ENCODE measurements at regions of chr6 and their contacts with region 1.

Region 1: GRCh38 chr6:111873178-111874024 is at the start of gene FYN:
- DNase-seq: peak; percentile 92
- ATAC-seq: peak; percentile 99
- H3K4me3 ChIP-seq: peak within 1 kb of the TSS; percentile 66 to 82 (median 68)
- H3K27ac ChIP-seq: no peak within 1 kb of the TSS
- H3K4me1 ChIP-seq: peaks cover 40% of the 10 kb centered on the region
- H3K27me3 ChIP-seq: peaks cover 0 to 21% of the 10 kb centered on the region in 2 experiments; a peak in 4 of 5 replicates
- CTCF ChIP-seq: peak; percentile 47
- EP300 ChIP-seq: no peak
- POLR2A ChIP-seq: no peak; a peak in 1 of 4 replicates
- RAD21 ChIP-seq: peak; percentile 56; the same call in 1 of the 2 replicates
- total RNA-seq, gene FYN: 14.6 and 15.5 TPM in 2 replicates

Region 2: DNA sequence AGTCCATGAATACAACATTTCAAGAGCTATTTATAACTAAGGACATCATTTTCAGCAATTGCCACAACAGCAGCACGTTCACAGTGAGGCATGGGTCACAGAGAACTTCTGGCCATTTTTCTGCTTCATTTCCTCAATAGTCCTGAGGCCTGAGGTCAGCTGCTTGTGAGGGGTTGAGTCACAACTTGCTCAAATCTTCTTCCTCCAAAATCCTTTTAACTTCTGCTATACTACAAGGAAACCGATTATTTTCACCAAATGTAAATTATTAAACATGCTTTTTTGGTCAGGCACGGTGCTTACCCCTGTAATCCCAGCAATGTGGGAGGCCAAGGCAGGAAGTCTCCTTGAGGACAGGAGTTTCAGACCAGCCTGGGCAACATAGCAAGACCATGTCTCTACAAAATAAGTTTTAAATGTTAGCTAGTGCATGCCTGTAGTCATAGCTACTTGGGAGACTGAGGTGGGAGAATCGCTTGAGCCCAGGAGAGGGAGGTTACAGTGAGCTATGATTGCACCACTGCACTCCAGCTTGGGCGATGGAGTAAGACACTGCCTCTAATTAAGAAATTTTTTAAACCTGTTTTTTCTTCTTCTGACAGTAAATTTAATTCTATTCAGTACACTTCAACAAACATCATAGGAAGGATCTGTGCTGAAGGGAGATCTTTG is 797.2 kb before region 1 on chr6:
- CTCF ChIA-PET with region 1: no interaction called
- POLR2A ChIA-PET with region 1: no interaction called
- in situ Hi-C with region 1: no loop called
- intact Hi-C with region 1: no loop called
- DNase-seq: no peak
- ATAC-seq: no peak
- H3K4me3 ChIP-seq: no peak overlapping the region
- H3K27ac ChIP-seq: no peak overlapping the region
- H3K4me1 ChIP-seq: no peaks in the 10 kb centered on the region
- H3K27me3 ChIP-seq: peaks cover 2 to 8% of the 10 kb centered on the region in 2 experiments; a peak in 2 of 5 replicates
- CTCF ChIP-seq: no peak
- EP300 ChIP-seq: no peak
- POLR2A ChIP-seq: no peak
- RAD21 ChIP-seq: no peak

Region 3: DNA sequence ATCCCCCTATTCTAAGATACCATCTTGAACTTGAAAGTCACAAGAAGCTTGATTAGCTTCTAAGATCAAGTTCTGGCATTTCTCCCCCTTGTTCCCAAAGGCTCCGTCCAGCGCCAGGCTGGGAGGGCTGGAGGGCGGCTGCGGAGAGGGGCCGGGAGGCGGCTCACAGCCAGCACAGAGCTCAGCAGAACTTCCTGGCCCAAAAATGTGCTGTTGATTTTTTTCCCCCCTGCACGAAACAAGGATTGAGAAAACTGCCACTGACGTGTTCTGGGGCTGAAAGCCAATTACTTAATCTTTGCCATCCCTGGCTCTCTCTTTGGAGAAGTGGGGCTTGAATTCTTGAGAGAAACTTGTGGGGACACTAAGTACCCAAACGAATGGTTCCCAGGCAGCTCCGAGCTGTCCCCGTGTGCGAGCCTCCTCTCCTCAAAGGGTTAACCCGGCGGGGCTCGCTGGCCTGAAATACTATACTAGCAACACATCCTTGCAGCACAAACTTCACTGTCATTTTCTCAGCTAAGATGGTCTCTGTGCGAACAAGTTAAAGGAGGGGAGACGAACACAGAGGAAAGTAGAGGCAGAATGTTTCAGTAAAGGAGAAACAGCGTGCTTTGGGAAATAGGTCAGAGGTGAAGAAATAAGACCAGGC is 268.2 kb before region 1 on chr6:
- CTCF ChIA-PET with region 1: no interaction called
- POLR2A ChIA-PET with region 1: no interaction called
- in situ Hi-C with region 1: no loop called
- intact Hi-C with region 1: no loop called
- DNase-seq: no peak
- ATAC-seq: peak; percentile 45
- H3K4me3 ChIP-seq: peak overlapping the region; percentile 72 to 93 (median 82)
- H3K27ac ChIP-seq: peak overlapping the region; percentile 66
- H3K4me1 ChIP-seq: peaks cover 78% of the 10 kb centered on the region
- H3K27me3 ChIP-seq: no peaks in the 10 kb centered on the region; a peak in 1 of 5 replicates
- CTCF ChIP-seq: no peak
- EP300 ChIP-seq: no peak
- POLR2A ChIP-seq: no peak
- RAD21 ChIP-seq: no peak

Region 4: DNA sequence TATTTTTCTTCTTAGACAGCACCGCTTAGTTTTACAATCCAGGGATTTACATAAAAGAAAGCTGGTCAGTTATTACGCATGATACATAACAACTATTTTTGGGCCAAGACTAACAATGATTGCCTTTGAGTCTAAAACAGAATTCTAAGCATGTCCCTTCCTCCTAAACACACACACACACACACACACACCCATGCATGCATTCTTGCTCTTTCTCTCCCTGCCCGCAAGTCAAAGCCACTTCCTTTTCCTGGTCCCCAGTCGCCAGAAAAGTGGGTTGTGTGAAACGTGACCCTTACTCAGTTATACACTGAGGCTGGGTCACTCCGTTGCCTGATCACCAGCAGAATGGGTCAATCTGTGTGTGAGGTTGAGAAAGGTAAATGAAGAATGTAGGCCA is 31.6 kb before region 1 on chr6:
- CTCF ChIA-PET with region 1: no interaction called
- POLR2A ChIA-PET with region 1: no interaction called
- in situ Hi-C with region 1: no loop called
- intact Hi-C with region 1: loop called (anchors 1 kb)
- DNase-seq: no peak
- ATAC-seq: no peak
- H3K4me3 ChIP-seq: no peak overlapping the region
- H3K27ac ChIP-seq: no peak overlapping the region
- H3K4me1 ChIP-seq: peaks cover 53% of the 10 kb centered on the region
- H3K27me3 ChIP-seq: no peaks in the 10 kb centered on the region
- CTCF ChIP-seq: no peak
- EP300 ChIP-seq: no peak
- POLR2A ChIP-seq: no peak
- RAD21 ChIP-seq: no peak

Region 5: DNA sequence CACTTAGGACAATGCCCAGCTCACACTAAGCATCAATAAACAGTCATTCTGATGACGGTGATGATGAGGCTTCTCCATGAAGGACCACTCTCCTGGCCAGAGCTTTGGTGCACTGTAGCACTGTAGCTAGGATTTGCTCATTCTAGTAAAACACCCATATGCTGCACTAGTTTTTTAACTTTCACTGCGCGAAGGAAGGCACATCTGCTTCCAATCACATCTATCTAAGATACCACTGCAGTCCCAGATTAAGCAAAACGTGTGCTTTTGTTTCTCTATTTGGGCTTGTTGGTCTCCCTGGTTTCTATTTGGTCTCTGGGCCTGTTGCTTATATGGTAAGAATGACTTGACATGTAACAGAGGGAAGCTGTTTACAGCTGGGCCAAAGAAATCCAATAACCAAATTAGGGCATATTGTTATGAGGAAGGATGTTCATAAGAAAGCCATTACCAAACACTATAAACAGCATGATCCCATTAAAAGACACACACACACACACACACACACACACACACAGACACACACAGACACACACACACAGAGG is 276.4 kb after region 1 on chr6:
- CTCF ChIA-PET with region 1: no interaction called
- POLR2A ChIA-PET with region 1: no interaction called
- in situ Hi-C with region 1: no loop called
- intact Hi-C with region 1: no loop called
- DNase-seq: no peak
- ATAC-seq: no peak
- H3K4me3 ChIP-seq: no peak overlapping the region
- H3K27ac ChIP-seq: no peak overlapping the region
- H3K4me1 ChIP-seq: peaks cover 7% of the 10 kb centered on the region
- H3K27me3 ChIP-seq: no peaks in the 10 kb centered on the region
- CTCF ChIP-seq: no peak
- EP300 ChIP-seq: no peak
- POLR2A ChIP-seq: no peak
- RAD21 ChIP-seq: no peak